HepG2 (cell line): ENCODE measurements at regions of chr4 and their contacts with region 1.

Region 1: GRCh38 chr4:61517144-61517543 is 317.0 kb downstream of the ADGRL3 start:
- DNase-seq: peak; percentile 56
- ATAC-seq: peak; percentile 100
- H3K4me3 ChIP-seq: no peak overlapping the region
- H3K27ac ChIP-seq: no peak overlapping the region
- H3K4me1 ChIP-seq: no peaks in the 10 kb centered on the region
- H3K27me3 ChIP-seq: no peaks in the 10 kb centered on the region
- CTCF ChIP-seq: peak; percentile 81
- EP300 ChIP-seq: no peak
- POLR2A ChIP-seq: no peak
- RAD21 ChIP-seq: no peak; the same call in 1 of the 2 replicates

Region 2: GRCh38 chr4:61555789-61556188 is 38.6 kb after region 1 on chr4:
- CTCF ChIA-PET with region 1: no interaction called
- POLR2A ChIA-PET with region 1: no interaction called
- in situ Hi-C with region 1: no loop called
- intact Hi-C with region 1: loop called (anchors 1 kb)
- DNase-seq: peak; percentile 20
- ATAC-seq: peak; percentile 50
- H3K4me3 ChIP-seq: no peak overlapping the region
- H3K27ac ChIP-seq: no peak overlapping the region
- H3K4me1 ChIP-seq: peaks cover 16% of the 10 kb centered on the region
- H3K27me3 ChIP-seq: no peaks in the 10 kb centered on the region
- CTCF ChIP-seq: no peak
- EP300 ChIP-seq: no peak
- POLR2A ChIP-seq: no peak
- RAD21 ChIP-seq: no peak

Region 3: GRCh38 chr4:61590881-61591280 is 73.7 kb after region 1 on chr4:
- CTCF ChIA-PET with region 1: no interaction called
- POLR2A ChIA-PET with region 1: no interaction called
- in situ Hi-C with region 1: no loop called
- intact Hi-C with region 1: loop called (anchors 1 kb)
- DNase-seq: no peak
- ATAC-seq: no peak
- H3K4me3 ChIP-seq: no peak overlapping the region
- H3K27ac ChIP-seq: no peak overlapping the region
- H3K4me1 ChIP-seq: no peaks in the 10 kb centered on the region
- H3K27me3 ChIP-seq: no peaks in the 10 kb centered on the region
- CTCF ChIP-seq: 0 out of 2 replicates have a peak, but pooled peaks have one; percentile 14
- EP300 ChIP-seq: no peak
- POLR2A ChIP-seq: no peak
- RAD21 ChIP-seq: no peak

Region 4: GRCh38 chr4:61741327-61742096 is 224.4 kb after region 1 on chr4:
- CTCF ChIA-PET with region 1: no interaction called
- POLR2A ChIA-PET with region 1: no interaction called
- in situ Hi-C with region 1: no loop called
- intact Hi-C with region 1: no loop called
- DNase-seq: peak; percentile 1
- ATAC-seq: peak; percentile 53; the same call in 1 of the 3 replicates
- H3K4me3 ChIP-seq: no peak overlapping the region
- H3K27ac ChIP-seq: no peak overlapping the region
- H3K4me1 ChIP-seq: no peaks in the 10 kb centered on the region
- H3K27me3 ChIP-seq: no peaks in the 10 kb centered on the region
- CTCF ChIP-seq: 0 out of 2 replicates have a peak, but pooled peaks have one; percentile 25
- EP300 ChIP-seq: no peak
- POLR2A ChIP-seq: no peak
- RAD21 ChIP-seq: no peak